MCF 10A (cell line): ENCODE measurements at regions of chr17 and their contacts with region 1.

Region 1: DNA sequence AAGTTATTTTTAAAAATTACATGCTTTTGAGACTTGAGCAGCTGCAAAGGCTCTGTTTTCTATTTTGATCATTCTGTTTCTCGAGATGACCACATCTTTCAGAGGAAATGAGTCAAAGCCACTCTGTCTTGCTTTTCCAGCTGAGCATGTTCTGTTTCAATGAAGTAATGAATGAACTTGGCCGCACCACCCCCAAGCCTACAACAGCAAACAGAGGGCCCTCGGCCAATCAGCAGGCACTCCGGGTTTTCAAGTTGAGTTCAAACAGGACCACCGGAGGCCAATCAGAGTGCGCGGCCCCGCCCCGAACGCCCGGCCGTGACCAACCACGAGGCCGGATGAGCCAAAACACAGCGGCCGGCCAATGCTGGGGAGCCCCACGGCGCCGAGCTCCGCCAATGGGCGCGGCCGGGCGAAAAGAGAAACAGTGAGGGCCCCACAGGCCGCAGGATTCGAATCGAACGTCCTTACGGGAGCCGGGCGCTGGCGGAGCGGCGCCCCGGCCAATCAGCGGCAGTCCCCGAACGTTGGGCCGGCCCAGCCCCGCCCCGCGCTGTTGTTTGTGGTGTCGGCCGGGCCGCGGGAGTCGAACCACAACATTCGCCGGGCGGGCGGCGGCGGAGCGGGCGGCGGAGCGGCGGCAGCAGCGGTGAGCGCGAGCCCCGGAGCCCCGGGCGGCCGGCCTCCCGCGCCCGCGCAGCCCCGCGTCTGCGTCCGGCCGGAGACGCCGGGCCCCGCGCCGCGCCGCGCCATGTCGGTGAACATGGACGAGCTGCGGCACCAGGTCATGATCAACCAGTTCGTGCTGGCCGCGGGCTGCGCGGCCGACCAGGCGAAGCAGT is at the start of gene UBALD2:
- DNase-seq: peak; percentile 99
- H3K4me3 Mint-ChIP-seq: peak within 1 kb of the TSS; percentile 76
- H3K27ac Mint-ChIP-seq: peak within 1 kb of the TSS; percentile 87
- H3K4me1 Mint-ChIP-seq: peaks cover 7% of the 10 kb centered on the region
- H3K27me3 Mint-ChIP-seq: no peaks in the 10 kb centered on the region
- CTCF ChIP-seq: no peak
- total RNA-seq, gene UBALD2: 84.9 and 109 TPM in 2 replicates

Region 2: GRCh38 chr17:76103274-76104139 is 161.5 kb before region 1 on chr17 and contains the start of gene EXOC7:
- CTCF ChIA-PET with region 1: no interaction called
- POLR2A ChIA-PET with region 1: interaction called, 21 read pairs
- intact Hi-C with region 1: no loop called
- DNase-seq: peak; percentile 93
- H3K4me3 Mint-ChIP-seq: peak within 1 kb of the TSS; percentile 95
- H3K27ac Mint-ChIP-seq: peak within 1 kb of the TSS; percentile 98
- H3K4me1 Mint-ChIP-seq: peaks cover 5% of the 10 kb centered on the region
- H3K27me3 Mint-ChIP-seq: no peaks in the 10 kb centered on the region
- CTCF ChIP-seq: peak; percentile 13
- total RNA-seq, gene EXOC7: 80.8 and 106 TPM in 2 replicates

Region 3: GRCh38 chr17:76132574-76133338 is 132.2 kb before region 1 on chr17:
- CTCF ChIA-PET with region 1: interaction called, 3 read pairs
- POLR2A ChIA-PET with region 1: interaction called, 11 read pairs
- intact Hi-C with region 1: no loop called
- DNase-seq: peak; percentile 92
- H3K4me3 Mint-ChIP-seq: no peak overlapping the region
- H3K27ac Mint-ChIP-seq: no peak overlapping the region
- H3K4me1 Mint-ChIP-seq: peaks cover 11% of the 10 kb centered on the region
- H3K27me3 Mint-ChIP-seq: no peaks in the 10 kb centered on the region
- CTCF ChIP-seq: no peak

Region 4: GRCh38 chr17:76237859-76238313 is 27.1 kb before region 1 on chr17:
- CTCF ChIA-PET with region 1: no interaction called
- POLR2A ChIA-PET with region 1: interaction called, 10 read pairs
- intact Hi-C with region 1: no loop called
- DNase-seq: peak; percentile 55
- H3K4me3 Mint-ChIP-seq: no peak overlapping the region
- H3K27ac Mint-ChIP-seq: no peak overlapping the region
- H3K4me1 Mint-ChIP-seq: peaks cover 6% of the 10 kb centered on the region
- H3K27me3 Mint-ChIP-seq: peaks cover 10% of the 10 kb centered on the region
- CTCF ChIP-seq: no peak

Region 5: GRCh38 chr17:76246080-76247066 is 18.6 kb before region 1 on chr17:
- CTCF ChIA-PET with region 1: interaction called, 3 read pairs
- POLR2A ChIA-PET with region 1: interaction called, 56 read pairs
- intact Hi-C with region 1: loop called (anchors 2 kb)
- DNase-seq: no peak
- H3K4me3 Mint-ChIP-seq: no peak overlapping the region
- H3K27ac Mint-ChIP-seq: no peak overlapping the region
- H3K4me1 Mint-ChIP-seq: peaks cover 9% of the 10 kb centered on the region
- H3K27me3 Mint-ChIP-seq: peaks cover 2% of the 10 kb centered on the region
- CTCF ChIP-seq: no peak

Region 6: GRCh38 chr17:76252040-76252954 is 12.7 kb before region 1 on chr17:
- CTCF ChIA-PET with region 1: interaction called, 3 read pairs
- POLR2A ChIA-PET with region 1: interaction called, 56 read pairs
- intact Hi-C with region 1: loop called (anchors 1 kb)
- DNase-seq: peak; percentile 99
- H3K4me3 Mint-ChIP-seq: peak overlapping the region; percentile 9
- H3K27ac Mint-ChIP-seq: peak overlapping the region; percentile 83
- H3K4me1 Mint-ChIP-seq: peaks cover 23% of the 10 kb centered on the region
- H3K27me3 Mint-ChIP-seq: no peaks in the 10 kb centered on the region
- CTCF ChIP-seq: no peak

Region 7: DNA sequence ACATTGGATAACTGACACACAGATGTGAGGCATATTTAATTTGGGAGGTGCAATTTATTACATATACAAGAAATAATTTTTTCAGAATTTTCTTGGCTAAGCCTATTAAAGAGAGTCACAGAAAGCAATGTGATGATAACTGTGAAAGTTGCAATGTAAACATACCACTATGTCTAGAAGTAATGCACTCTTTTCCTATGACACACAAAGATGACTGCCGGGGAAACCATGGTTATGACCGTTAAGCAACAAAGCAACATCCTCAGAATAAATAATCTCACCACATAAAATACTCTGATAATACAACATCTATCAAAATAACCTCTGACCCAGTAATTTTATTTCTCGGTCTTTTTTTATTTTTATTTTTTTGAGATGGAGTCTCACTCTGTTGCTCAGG is 53.6 kb after region 1 on chr17:
- CTCF ChIA-PET with region 1: no interaction called
- POLR2A ChIA-PET with region 1: no interaction called
- intact Hi-C with region 1: no loop called
- DNase-seq: no peak
- H3K4me3 Mint-ChIP-seq: no peak overlapping the region
- H3K27ac Mint-ChIP-seq: no peak overlapping the region
- H3K4me1 Mint-ChIP-seq: no peaks in the 10 kb centered on the region
- H3K27me3 Mint-ChIP-seq: no peaks in the 10 kb centered on the region
- CTCF ChIP-seq: no peak